Ascending aorta (tissue), 2 donors: ENCODE measurements at regions of chr2 and their contacts with region 1.

Region 1: DNA sequence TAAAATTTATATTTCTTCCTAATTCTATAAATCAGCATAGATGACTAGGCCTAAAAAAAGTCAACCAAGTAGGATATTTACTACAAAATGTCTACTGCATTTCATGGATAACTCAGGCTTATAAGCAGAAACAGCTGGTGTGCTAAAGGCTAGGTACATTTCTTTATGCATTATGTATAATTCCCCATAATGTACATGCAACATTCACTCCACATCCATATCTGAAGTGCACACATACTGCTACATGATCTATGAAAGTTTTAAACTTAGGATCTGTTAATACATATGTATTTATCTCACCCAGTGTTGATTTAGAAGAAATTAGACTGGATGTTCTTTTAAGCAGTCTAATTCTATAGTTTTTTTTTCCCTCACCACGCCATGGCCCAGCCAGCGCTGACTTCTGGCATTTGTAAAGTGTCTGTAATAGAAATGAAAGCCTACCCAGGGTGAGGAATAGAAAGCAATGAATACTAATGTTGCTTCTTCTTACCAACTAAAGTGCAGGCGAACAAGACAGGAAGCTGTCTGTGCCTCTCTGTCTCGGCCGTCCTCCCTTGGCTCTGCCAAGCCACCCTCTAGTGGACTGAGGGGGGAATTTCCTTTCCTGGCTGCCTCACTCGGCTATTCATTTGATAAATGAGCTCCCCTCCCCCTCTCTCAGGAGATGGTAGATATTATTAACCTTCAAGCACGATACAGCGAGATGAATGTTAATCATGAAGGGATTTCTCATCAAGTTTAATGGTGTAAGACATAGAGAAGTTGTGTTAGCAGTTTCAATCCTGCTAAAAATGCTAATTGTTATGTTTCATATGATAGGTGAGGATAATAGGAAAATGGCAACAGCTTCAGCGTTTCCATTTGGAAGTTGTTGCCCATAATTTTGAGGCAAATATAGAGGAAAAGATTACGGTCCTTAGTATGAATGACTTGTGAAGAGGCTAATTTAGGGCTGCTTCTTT is 384.5 kb downstream of the MTX2 start:
- DNase-seq: no peak
- H3K4me3 ChIP-seq: no peak overlapping the region
- H3K27ac ChIP-seq: no peak overlapping the region
- H3K4me1 ChIP-seq: no peaks in the 10 kb centered on the region
- H3K27me3 ChIP-seq: no peaks in the 10 kb centered on the region
- CTCF ChIP-seq: peak; percentile 42 to 65 (median 55)

Region 2: DNA sequence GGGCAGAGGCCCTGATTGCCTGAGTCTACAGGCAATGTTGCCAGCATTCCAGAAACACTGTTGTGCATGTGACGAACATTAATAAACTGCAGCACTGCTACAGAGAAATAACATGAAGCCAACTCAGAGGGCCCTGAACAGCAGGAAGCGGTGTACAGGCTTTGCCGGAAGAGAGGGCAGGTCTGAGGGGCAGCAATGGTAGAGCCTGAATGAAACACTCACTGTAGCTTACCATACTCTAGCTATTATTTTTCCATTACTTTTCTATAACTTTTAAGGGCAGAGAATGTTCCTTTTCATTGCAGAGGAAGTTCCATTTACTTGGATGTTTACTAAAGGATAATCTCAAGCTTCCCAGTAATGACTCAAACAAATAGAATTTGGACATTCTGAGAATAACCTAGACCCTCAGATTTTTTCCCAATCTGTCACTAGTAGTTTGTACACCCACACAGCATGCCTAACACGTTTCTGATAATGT is 234.1 kb before region 1 on chr2:
- intact Hi-C with region 1: no loop called
- DNase-seq: no peak
- H3K4me3 ChIP-seq: no peak overlapping the region
- H3K27ac ChIP-seq: peak overlapping the region; percentile 62 to 82
- H3K4me1 ChIP-seq: peaks cover 0 to 6% of the 10 kb centered on the region in 2 donors
- H3K27me3 ChIP-seq: no peaks in the 10 kb centered on the region
- CTCF ChIP-seq: no peak

Region 3: DNA sequence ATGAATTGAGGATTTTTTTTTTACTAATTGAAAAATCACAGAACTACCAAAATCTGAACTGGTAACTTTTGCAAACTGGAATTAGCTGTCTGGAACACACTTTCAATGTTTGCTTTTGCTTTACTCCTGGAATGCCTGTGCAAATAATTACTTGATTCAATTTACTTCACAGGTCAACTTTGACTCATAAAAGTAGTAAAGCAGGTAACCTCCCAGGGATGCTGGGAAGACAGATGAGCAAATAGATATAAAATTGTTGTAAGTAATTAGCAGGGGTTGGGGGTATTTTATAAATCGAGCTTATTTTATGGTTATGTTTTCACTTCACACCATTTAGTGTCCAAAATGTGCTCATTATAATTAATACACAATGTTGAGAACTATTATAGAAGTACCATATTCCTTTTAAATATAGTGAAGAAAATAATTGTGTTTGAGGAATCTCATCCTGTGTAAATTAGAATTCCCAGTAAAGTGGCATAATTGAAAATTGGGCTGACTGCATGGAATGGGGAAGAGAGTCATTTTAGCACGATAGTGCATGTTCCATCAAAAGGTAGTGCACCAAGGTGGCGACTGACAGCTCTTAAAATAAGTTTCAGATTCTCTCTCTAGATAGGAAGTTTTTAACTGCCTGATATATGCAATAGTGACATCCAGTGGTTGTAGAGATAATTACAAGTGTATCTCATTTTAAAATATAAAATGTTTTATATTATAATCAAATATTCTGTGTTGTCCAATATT is 160.7 kb after region 1 on chr2:
- intact Hi-C with region 1: loop called (anchors 5 kb)
- DNase-seq: no peak
- H3K4me3 ChIP-seq: no peak overlapping the region
- H3K27ac ChIP-seq: no peak overlapping the region
- H3K4me1 ChIP-seq: peaks cover 0 to 9% of the 10 kb centered on the region in 2 donors
- H3K27me3 ChIP-seq: no peaks in the 10 kb centered on the region
- CTCF ChIP-seq: peak; percentile 45 to 72 (median 61)

Region 4: GRCh38 chr2:177148477-177149154 is 494.9 kb after region 1 on chr2:
- intact Hi-C with region 1: loop called (anchors 10 kb)
- DNase-seq: peak in 1 of 2 donors; percentile 83
- H3K4me3 ChIP-seq: peak overlapping the region; percentile 24 to 65
- H3K27ac ChIP-seq: no peak overlapping the region
- H3K4me1 ChIP-seq: peaks cover 0 to 4% of the 10 kb centered on the region in 2 donors
- H3K27me3 ChIP-seq: peaks cover 4% of the 10 kb centered on the region
- CTCF ChIP-seq: peak; percentile 25 to 74 (median 73)